H1 (cell line): ENCODE measurements at regions of chr16 and their contacts with region 1.

Region 1: GRCh38 chr16:19860166-19861041 is 24.2 kb downstream of the GPRC5B start:
- DNase-seq: peak in 1 of 2 experiments; percentile 78
- H3K4me3 ChIP-seq: peak overlapping the region in 3 of 4 experiments; percentile 8 to 49 (median 18); a peak in 4 of 8 replicates
- H3K27ac ChIP-seq: peak overlapping the region; percentile 83
- H3K4me1 ChIP-seq: peaks cover 18 to 47% (median 40%) of the 10 kb centered on the region in 4 experiments
- H3K27me3 ChIP-seq: no peaks in the 10 kb centered on the region
- CTCF ChIP-seq: no peak
- EP300 ChIP-seq: no peak
- POLR2A ChIP-seq: no peak; a peak in 1 of 3 replicates
- RAD21 ChIP-seq: no peak

Region 2: DNA sequence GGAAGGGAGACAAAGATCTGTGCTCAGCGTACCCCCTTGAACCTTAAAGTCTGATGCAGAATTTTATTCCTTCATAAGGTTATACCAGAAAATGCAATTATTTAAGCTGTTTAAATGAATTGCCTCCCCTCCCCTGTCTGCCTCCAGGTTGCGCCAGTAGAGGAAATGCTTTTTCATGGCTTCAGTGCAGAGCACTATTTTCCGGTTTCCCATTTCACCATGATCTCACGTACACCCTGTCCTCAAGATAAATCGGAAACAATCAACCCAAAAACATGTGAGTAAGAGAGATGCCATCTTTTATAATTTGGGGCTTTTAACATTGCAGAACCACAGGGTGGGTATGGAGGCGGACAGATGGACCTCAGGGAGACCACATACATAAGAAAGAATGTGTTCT is 126.9 kb before region 1 on chr16:
- CTCF ChIA-PET with region 1: no interaction called
- POLR2A ChIA-PET with region 1: no interaction called
- DNase-seq: no peak
- H3K4me3 ChIP-seq: no peak overlapping the region
- H3K27ac ChIP-seq: no peak overlapping the region
- H3K4me1 ChIP-seq: 0 out of 7 replicates have a peak, but pooled peaks cover 0 to 4% (median 2%) of the 10 kb centered on the region in 4 experiments
- H3K27me3 ChIP-seq: no peaks in the 10 kb centered on the region
- CTCF ChIP-seq: no peak
- EP300 ChIP-seq: no peak
- POLR2A ChIP-seq: no peak
- RAD21 ChIP-seq: no peak

Region 3: GRCh38 chr16:19879241-19879792 is 18.9 kb after region 1 on chr16:
- CTCF ChIA-PET with region 1: interaction called, 9 read pairs
- POLR2A ChIA-PET with region 1: interaction called, 114 read pairs
- DNase-seq: peak; percentile 34 to 56
- H3K4me3 ChIP-seq: no peak overlapping the region; a peak in 1 of 8 replicates
- H3K27ac ChIP-seq: peak overlapping the region; percentile 55; the same call in 1 of the 2 replicates
- H3K4me1 ChIP-seq: peaks cover 9 to 45% (median 29%) of the 10 kb centered on the region in 4 experiments
- H3K27me3 ChIP-seq: no peaks in the 10 kb centered on the region
- CTCF ChIP-seq: peak in 2 of 3 experiments; percentile 32 to 48; a peak in 2 of 4 replicates
- EP300 ChIP-seq: no peak
- POLR2A ChIP-seq: 0 out of 3 replicates have a peak, but pooled peaks of 1 of the 2 experiments have one; percentile 23
- RAD21 ChIP-seq: peak; percentile 17 to 47; a peak in 3 of 4 replicates